CD4-positive, alpha-beta T cell (primary cell): ENCODE measurements at regions of chr10 and their contacts with region 1.

Region 1: DNA sequence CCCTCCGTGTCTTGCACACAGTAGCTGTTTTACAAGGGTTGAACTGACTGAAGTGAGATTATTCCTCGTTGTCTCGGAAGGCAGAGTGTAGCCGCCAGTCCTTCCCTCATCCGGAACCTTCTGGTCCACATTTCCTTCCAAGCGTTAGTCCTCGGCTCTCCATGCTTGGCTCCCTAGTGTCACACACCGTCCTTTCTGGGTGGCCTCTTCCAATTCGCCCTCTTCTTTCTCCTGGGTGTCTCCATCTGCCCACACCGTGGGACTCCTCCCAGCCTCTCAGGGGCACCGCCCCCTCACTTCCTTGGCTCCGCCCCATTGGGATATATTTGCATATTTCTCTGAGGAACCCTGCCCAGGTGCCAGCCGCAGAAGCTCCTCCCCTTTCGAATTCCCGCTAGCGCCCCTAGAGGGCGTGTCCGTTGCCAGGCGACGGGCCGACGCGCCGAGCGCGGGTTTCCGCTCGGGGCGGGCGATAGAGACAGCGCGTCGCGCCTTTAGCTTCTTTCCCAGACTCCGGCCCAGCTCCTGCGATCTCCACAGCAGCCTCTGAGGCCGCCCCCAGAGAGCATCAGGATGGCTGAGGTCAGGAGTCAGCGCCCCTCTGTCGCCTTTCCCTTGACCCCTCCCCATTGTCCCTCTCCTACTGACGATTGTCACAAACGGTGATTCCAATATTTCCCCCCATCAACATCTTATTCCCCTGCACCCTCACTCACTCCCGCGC is at the start of gene CFAP58:
- DNase-seq: peak; percentile 84 to 97 (median 88)
- ATAC-seq: peak; percentile 80
- H3K4me3 ChIP-seq: peak within 1 kb of the TSS; percentile 46
- H3K4me3 Mint-ChIP-seq: peak within 1 kb of the TSS; percentile 26
- H3K27ac ChIP-seq: no peak within 1 kb of the TSS
- H3K27ac Mint-ChIP-seq: no peak within 1 kb of the TSS
- H3K4me1 ChIP-seq: peaks cover 27% of the 10 kb centered on the region
- H3K4me1 Mint-ChIP-seq: peaks cover 12% of the 10 kb centered on the region
- H3K27me3 ChIP-seq: no peaks in the 10 kb centered on the region
- H3K27me3 Mint-ChIP-seq: no peaks in the 10 kb centered on the region
- CTCF ChIP-seq: peak; percentile 84
- total RNA-seq, gene CFAP58: not detected

Region 2: DNA sequence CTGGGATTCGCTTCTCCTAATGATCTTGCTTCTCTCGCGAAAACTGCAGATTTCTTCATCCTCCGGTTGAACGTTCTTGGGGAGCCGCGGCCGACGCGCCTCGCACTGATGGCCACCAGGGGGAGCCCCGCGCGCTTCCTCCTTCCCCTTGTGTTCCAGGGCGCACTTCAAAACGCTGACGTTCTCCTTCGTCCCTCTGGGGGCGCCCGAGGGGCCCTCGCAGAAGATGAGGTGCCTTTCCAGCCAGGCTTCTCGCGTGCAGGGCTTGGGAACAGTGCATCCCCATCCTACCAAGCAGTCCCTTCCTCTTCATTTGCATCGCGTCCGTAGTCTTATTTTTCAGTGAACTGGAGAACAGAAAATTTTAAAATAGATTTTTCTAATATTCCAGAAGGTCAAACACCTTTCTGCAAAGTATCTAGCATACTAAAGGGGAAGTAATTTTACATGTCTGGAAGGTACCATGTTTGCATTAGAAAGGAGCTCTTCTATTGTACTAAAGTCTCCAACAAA is 62.0 kb before region 1 on chr10:
- CTCF ChIA-PET with region 1: interaction called, 27 read pairs
- POLR2A ChIA-PET with region 1: interaction called, 11 read pairs
- intact Hi-C with region 1: loop called (anchors 1 kb)
- DNase-seq: peak; percentile 81 to 95 (median 86)
- ATAC-seq: peak; percentile 100
- H3K4me3 ChIP-seq: no peak overlapping the region
- H3K4me3 Mint-ChIP-seq: no peak overlapping the region
- H3K27ac ChIP-seq: no peak overlapping the region
- H3K27ac Mint-ChIP-seq: no peak overlapping the region
- H3K4me1 ChIP-seq: peaks cover 8% of the 10 kb centered on the region
- H3K4me1 Mint-ChIP-seq: peaks cover 7% of the 10 kb centered on the region
- H3K27me3 ChIP-seq: peaks cover 0 to 4% of the 10 kb centered on the region in 2 experiments
- H3K27me3 Mint-ChIP-seq: peaks cover 26% of the 10 kb centered on the region
- CTCF ChIP-seq: peak; percentile 100

Region 3: DNA sequence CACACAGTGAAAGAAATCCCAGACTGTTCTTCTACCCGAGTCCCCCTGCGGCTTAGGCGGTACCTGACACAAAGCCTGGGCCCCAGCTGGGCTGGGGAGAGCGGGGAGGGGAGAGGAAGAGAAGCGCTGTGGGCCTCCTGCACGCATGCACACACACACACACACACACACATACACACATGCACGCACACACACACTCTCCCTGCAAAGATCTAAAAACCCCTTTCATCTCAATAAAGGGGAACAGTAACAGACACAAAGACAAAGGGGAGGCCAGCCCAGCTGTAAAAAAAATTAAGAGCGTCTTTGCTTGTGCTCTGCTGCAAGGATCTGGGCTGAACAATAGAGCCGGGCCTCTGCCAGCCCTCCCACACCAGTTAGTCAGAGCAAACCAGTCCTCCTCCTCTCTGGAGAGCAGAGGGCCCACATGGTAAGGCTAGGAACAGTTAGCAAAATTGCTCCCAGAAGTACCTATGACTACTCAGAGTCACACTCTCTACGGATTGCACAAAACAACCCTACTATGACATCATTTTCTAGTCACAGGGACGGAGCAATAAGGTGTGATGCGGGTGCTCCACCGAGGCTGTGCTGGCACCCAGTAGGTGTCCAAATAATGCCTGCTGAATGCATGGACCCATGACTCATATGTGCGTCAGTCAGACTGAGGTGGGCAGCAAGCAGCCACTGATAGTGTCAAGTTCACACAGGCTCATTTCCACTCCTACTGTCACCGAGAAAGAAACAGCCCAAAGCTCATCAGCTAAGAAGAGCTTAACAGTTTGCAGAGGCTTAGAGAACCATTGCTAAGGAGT is 24.4 kb before region 1 on chr10:
- CTCF ChIA-PET with region 1: interaction called, 10 read pairs
- POLR2A ChIA-PET with region 1: interaction called, 4 read pairs
- intact Hi-C with region 1: no loop called
- DNase-seq: peak; percentile 44 to 88 (median 70)
- ATAC-seq: peak; percentile 65
- H3K4me3 ChIP-seq: peak overlapping the region; percentile 41
- H3K4me3 Mint-ChIP-seq: peak overlapping the region; percentile 84
- H3K27ac ChIP-seq: peak overlapping the region; percentile 75 to 81
- H3K27ac Mint-ChIP-seq: peak overlapping the region; percentile 88
- H3K4me1 ChIP-seq: peaks cover 97% of the 10 kb centered on the region
- H3K4me1 Mint-ChIP-seq: peaks cover 100% of the 10 kb centered on the region
- H3K27me3 ChIP-seq: no peaks in the 10 kb centered on the region
- H3K27me3 Mint-ChIP-seq: no peaks in the 10 kb centered on the region
- CTCF ChIP-seq: no peak